Posterior cingulate gyrus (tissue), 11 donors: ENCODE measurements at regions of chr19 and their contacts with region 1.

Region 1: DNA sequence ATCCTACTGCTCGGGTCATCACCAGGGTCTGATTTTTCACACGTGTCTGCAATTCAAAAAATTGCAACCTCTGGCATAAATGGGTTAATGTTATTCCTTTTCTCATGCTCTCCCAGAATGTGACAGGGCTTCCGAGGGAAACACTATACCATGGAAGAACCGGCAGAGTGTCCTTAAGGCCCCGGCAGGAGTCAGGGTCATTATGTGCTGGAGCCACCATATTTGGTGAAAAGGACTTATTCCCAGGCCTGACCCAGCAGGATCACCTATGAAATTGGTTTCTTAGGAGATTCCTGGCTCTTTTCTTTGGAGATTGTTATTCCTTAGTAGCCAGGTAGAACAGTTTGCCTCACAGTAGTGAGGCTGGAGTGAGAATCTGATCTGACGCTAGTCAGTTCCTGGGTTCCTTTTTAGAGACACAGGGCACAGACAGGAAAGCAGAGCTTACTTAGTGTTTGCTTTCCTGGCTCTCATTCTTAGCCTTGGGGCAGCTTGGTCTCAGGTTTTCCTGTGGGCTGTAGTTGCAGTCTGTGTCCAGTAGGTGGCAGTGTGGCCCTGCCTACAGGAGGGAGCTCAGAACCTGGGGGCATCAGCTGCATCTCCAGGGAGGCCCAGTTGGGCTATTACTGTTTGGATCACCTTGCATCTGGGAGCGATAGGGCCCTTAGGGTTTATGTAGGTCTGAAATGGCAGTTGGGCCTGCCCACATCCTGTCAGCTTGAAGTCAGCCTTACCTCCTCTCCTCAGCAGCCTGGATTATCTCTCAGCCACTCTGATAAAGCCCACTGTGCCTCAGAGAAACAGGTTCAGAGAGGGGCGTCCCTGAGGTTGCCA is 12.4 kb downstream of the SNRNP70 start:
- DNase-seq: peak; percentile 54 to 96 (median 78)

Region 2: GRCh38 chr19:48954595-48955310 is 142.9 kb before region 1 on chr19 and contains the start of gene BAX:
- intact Hi-C with region 1: no loop called
- DNase-seq: peak; percentile 94 to 99 (median 96)

Region 3: GRCh38 chr19:49148784-49149651 is 51.3 kb after region 1 on chr19:
- intact Hi-C with region 1: loop called (anchors 5 kb)
- DNase-seq: peak; percentile 73 to 99 (median 89)

Region 4: DNA sequence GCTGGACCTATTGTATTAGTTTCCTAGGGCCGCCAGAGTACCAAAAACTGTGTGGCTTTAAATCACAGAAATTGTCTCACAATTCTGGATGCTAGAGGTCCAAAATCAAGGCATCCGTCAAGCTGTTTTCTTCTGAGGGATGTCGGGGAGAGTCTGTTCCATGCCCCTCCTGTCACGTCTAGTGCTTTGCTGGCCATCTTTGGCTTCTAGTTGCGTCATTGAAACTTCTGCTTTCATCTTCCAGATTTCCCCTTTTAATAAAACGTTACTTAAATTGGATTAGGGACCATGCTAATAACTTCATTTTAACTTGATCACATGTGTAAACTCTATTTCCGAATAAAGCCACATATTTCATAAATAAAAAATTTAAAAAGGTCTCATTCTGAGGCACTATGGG is 107.4 kb after region 1 on chr19:
- intact Hi-C with region 1: loop called (anchors 5 kb)
- DNase-seq: no peak